Activated naive CD8-positive, alpha-beta T cell treated with anti-CD3 and anti-CD28 coated beads, Interleukin-2, amount 10 ng/mL, durations not matched to agents 7 days and 5 days (primary cell): ENCODE measurements at regions of chr1 and their contacts with region 1.

Region 1: DNA sequence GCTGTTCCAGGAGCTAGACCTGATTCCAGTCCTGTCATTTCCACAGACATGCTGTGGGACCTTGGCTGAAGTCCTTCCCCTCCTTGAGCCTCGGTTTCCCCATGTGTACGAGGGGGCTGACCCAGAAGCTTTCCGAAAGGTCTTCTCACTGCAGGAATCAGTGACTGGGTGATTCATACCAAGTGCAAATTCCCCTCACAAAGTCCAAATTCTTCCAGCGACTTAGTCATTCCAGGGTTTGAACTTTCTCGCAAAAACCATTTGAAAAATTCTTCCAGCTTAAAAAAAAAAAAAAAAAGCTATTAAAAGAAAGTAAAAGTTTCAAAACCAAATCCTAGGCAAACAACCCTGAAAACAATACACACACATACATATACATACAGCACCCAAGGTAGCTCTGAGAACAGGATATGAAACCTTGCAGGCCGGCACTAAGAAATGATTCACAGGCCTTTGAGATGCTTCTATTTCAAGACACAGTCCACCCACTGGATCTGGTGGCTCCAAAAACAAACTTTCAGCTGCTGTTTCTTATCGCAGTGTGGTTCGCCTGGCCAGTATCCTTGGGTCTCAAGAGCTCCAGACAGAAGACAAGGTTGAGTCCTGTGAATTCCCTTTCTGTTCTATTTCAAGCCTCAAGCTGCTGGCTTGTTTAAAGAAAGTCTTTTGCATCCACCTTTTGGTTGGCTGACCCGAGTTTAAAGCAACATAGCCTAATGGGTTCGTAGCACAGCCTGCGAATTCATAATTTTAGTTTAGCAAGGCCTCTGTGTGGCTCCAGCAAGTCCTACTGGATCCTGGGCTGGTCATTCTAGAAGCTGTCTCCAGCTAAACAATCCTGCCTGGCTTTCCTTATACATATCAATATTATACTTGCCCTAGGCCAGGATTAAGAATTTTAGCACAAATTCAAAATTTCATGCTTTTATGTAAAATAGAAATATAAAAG is 18.0 kb upstream of the ID3 start:
- DNase-seq: no peak
- ATAC-seq: peak; percentile 95
- H3K4me3 Mint-ChIP-seq: peak overlapping the region; percentile 66
- H3K27ac Mint-ChIP-seq: peak overlapping the region; percentile 90
- H3K4me1 Mint-ChIP-seq: peaks cover 51% of the 10 kb centered on the region
- H3K27me3 Mint-ChIP-seq: no peaks in the 10 kb centered on the region

Region 2: DNA sequence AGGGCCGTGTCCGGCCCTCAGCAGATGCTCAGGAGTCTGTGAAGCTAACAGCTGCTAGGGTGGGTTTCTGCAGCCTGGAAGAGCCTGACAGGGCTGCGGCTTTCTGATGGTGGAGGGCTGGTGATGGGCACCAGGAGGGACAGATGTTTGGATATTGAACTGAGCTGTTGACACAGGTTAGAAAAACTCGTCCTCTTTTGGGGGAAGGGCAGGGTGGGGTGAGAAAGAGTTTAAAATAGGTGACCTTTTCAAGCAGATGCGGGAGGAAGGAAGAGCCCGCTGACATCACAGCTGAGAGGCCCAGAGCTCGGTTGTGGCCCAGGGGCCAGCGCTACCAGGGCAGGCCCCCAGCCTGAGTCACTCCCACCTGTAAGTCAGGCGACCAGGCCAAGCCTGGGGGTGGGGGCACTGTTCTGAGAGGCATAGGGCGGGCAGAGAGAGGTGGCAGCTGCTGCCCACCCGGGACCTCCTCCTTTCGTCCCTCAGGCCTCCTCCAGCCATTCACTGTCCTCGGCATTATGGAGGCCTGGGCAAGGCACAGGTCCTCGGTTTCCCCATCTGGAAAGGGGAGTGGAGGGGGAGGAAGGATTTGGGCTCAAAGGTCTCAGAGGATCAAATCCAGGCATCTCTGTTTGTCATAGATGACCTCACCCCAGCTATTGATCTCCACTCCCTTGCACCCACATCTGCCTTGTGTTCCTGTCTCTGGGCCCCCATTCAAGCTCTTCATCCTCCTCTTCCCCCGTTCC is 14.3 kb after region 1 on chr1:
- POLR2A ChIA-PET with region 1: interaction called, 30 read pairs
- DNase-seq: peak; percentile 66
- ATAC-seq: peak; percentile 81
- H3K4me3 Mint-ChIP-seq: peak overlapping the region; percentile 62
- H3K27ac Mint-ChIP-seq: peak overlapping the region; percentile 92
- H3K4me1 Mint-ChIP-seq: peaks cover 60% of the 10 kb centered on the region
- H3K27me3 Mint-ChIP-seq: no peaks in the 10 kb centered on the region

Region 3: GRCh38 chr1:23598424-23598823 is 21.1 kb after region 1 on chr1:
- POLR2A ChIA-PET with region 1: interaction called, 47 read pairs
- DNase-seq: no peak
- ATAC-seq: no peak
- H3K4me3 Mint-ChIP-seq: no peak overlapping the region
- H3K27ac Mint-ChIP-seq: peak overlapping the region; percentile 73
- H3K4me1 Mint-ChIP-seq: peaks cover 87% of the 10 kb centered on the region
- H3K27me3 Mint-ChIP-seq: no peaks in the 10 kb centered on the region

Region 4: GRCh38 chr1:23613191-23614031 is 36.1 kb after region 1 on chr1:
- POLR2A ChIA-PET with region 1: interaction called, 20 read pairs
- DNase-seq: peak; percentile 68
- ATAC-seq: peak; percentile 72
- H3K4me3 Mint-ChIP-seq: peak overlapping the region; percentile 60
- H3K27ac Mint-ChIP-seq: peak overlapping the region; percentile 98
- H3K4me1 Mint-ChIP-seq: peaks cover 55% of the 10 kb centered on the region
- H3K27me3 Mint-ChIP-seq: no peaks in the 10 kb centered on the region

Region 5: DNA sequence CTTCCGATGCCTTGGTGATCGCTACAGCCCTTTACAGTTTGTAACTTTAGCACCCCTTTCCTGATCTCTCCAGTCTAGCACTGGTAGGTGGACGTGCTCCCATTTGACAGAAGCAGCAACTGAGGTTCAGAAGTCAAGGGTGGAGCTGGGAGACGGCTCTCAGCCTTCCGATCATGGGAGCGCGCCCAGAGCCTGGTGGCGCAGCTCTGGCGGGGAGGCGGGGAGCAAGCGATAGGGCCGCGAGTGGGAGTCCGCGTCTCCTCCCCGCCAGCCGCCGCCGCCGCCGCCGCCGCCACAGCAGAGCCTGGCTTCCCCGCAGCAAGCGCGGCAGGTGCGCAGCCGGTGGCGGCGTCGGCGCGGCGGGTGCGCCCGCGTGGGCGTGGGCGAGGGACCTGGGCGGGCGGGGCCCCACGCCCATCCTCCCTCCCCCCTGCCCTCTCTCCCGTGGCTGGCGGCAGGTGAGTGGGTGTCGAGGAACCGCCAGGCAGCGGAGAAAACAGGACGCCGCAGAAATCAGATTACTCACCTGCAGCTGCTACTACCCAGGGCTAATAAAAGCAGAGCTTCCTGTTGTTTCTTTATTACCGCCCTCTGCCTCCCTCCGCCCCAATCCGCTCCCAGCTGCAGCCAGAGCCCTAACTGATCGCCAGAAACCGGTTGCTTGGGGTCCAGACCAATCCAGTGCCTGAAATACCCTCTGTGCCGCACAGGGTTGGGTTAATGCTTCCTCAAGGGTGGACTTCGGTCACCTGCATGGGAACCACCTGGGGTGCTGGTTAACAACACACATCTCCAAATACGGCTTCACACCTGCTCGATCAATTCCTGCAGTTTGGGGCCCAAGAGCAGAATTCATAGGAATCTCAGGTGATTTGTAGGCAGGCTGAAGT is 42.2 kb after region 1 on chr1:
- POLR2A ChIA-PET with region 1: interaction called, 10 read pairs
- DNase-seq: peak; percentile 70
- ATAC-seq: peak; percentile 82
- H3K4me3 Mint-ChIP-seq: peak overlapping the region; percentile 81
- H3K27ac Mint-ChIP-seq: peak overlapping the region; percentile 61
- H3K4me1 Mint-ChIP-seq: peaks cover 55% of the 10 kb centered on the region
- H3K27me3 Mint-ChIP-seq: no peaks in the 10 kb centered on the region

Region 6: GRCh38 chr1:23634842-23635651 is 57.7 kb after region 1 on chr1:
- POLR2A ChIA-PET with region 1: interaction called, 11 read pairs
- DNase-seq: peak; percentile 53
- ATAC-seq: peak; percentile 71
- H3K4me3 Mint-ChIP-seq: peak overlapping the region; percentile 67
- H3K27ac Mint-ChIP-seq: peak overlapping the region; percentile 84
- H3K4me1 Mint-ChIP-seq: peaks cover 20% of the 10 kb centered on the region
- H3K27me3 Mint-ChIP-seq: no peaks in the 10 kb centered on the region